K562 (cell line): ENCODE measurements at regions of chr6 and their contacts with region 1.

Region 1: GRCh38 chr6:34055223-34055933 is 90.5 kb downstream of the GRM4 start:
- DNase-seq: peak; percentile 86 to 94 (median 92)
- ATAC-seq: peak; percentile 88
- H3K4me3 ChIP-seq: no peak overlapping the region
- H3K27ac ChIP-seq: no peak overlapping the region
- H3K4me1 ChIP-seq: peaks cover 5 to 25% of the 10 kb centered on the region in 2 experiments; a peak in 4 of 5 replicates
- H3K27me3 ChIP-seq: peaks cover 13 to 46% of the 10 kb centered on the region in 2 experiments; a peak in 4 of 5 replicates
- CTCF ChIP-seq: peak; percentile 90 to 96 (median 93)
- EP300 ChIP-seq: no peak
- POLR2A ChIP-seq: no peak
- RAD21 ChIP-seq: peak; percentile 43 to 71

Region 2: GRCh38 chr6:34070315-34071135 is 15.1 kb after region 1 on chr6:
- CTCF ChIA-PET with region 1: no interaction called
- POLR2A ChIA-PET with region 1: interaction called, 10 read pairs
- in situ Hi-C with region 1: no loop called
- intact Hi-C with region 1: no loop called
- DNase-seq: no peak
- ATAC-seq: no peak; the same call in 2 of the 3 replicates
- H3K4me3 ChIP-seq: no peak overlapping the region
- H3K27ac ChIP-seq: no peak overlapping the region
- H3K4me1 ChIP-seq: peaks cover 0 to 24% of the 10 kb centered on the region in 2 experiments; a peak in 1 of 5 replicates
- H3K27me3 ChIP-seq: peaks cover 13 to 67% of the 10 kb centered on the region in 2 experiments; a peak in 4 of 5 replicates
- CTCF ChIP-seq: no peak
- EP300 ChIP-seq: no peak
- POLR2A ChIP-seq: no peak
- RAD21 ChIP-seq: no peak